Gastrocnemius medialis (tissue), 4 donors: ENCODE measurements at regions of chr11 and their contacts with region 1.

Region 1: GRCh38 chr11:65141896-65142494 is 7.7 kb upstream of the SYVN1 start:
- DNase-seq: peak in 1 of 2 donors; percentile 64
- ATAC-seq: peak; percentile 79 to 83
- H3K4me3 ChIP-seq: no peak overlapping the region
- H3K27ac ChIP-seq: peak overlapping the region; percentile 41 to 77 (median 50)
- H3K4me1 ChIP-seq: no peaks in the 10 kb centered on the region
- H3K27me3 ChIP-seq: no peaks in the 10 kb centered on the region
- CTCF ChIP-seq: no peak
- POLR2A ChIP-seq: no peak

Region 2: GRCh38 chr11:65180877-65181568 is 39.0 kb after region 1 on chr11:
- in situ Hi-C with region 1: no loop called
- intact Hi-C with region 1: loop called (anchors 5 kb)
- DNase-seq: peak; percentile 27 to 66
- ATAC-seq: peak; percentile 54 to 55
- H3K4me3 ChIP-seq: peak overlapping the region; percentile 85 to 99 (median 92)
- H3K27ac ChIP-seq: peak overlapping the region; percentile 93 to 99 (median 98)
- H3K4me1 ChIP-seq: peaks cover 18 to 25% of the 10 kb centered on the region in 2 donors
- H3K27me3 ChIP-seq: no peaks in the 10 kb centered on the region
- CTCF ChIP-seq: peak; percentile 52 to 75 (median 73)
- POLR2A ChIP-seq: peak; percentile 76 to 80